ENCODE measurements at regions of chr1 and their contacts with region 1.

Region 1: DNA sequence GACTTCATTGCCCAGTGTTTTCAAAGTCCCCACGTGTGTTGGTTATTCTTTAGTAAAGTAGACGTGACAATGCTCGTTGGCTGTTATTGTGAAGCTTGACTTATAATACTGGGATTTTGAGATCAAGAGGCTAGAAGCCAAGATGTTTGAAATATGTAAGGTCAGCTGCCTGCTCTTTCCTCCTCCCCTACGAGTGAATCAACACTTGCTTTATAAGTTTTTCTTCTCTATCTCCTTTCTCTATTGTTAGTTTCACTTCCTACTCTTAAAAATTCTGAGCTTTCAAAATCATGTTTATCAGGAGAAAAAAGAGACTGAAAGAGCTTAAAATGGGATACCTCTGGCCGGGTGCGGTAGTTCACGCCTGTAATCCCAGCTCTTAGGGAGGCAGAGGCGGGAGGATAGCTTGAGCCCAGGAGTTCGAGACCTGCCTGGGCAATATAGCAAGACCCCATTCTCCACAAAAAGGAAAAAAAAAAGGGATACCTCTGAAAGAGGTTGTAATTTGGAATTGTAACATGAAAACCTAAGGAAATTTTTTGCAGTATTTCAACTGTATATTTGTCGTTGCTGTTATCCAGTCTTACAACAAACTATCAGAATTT is 72.0 kb downstream of the EPB41 start:
- DNase-seq: peak; percentile 28
- H3K4me3 ChIP-seq: peak overlapping the region; percentile 24
- H3K27ac ChIP-seq: peak overlapping the region; percentile 96
- H3K4me1 ChIP-seq: peaks cover 65% of the 10 kb centered on the region
- H3K27me3 ChIP-seq: no peaks in the 10 kb centered on the region
- CTCF ChIP-seq: no peak

Region 2: GRCh38 chr1:28656335-28656734 is 330.1 kb before region 1 on chr1:
- CTCF ChIA-PET with region 1: no interaction called
- POLR2A ChIA-PET with region 1: no interaction called
- intact Hi-C with region 1: no loop called
- DNase-seq: no peak
- H3K4me3 ChIP-seq: no peak overlapping the region
- H3K27ac ChIP-seq: no peak overlapping the region
- H3K4me1 ChIP-seq: no peaks in the 10 kb centered on the region
- H3K27me3 ChIP-seq: no peaks in the 10 kb centered on the region
- CTCF ChIP-seq: no peak

Region 3: GRCh38 chr1:28914228-28915030 is 72.0 kb before region 1 on chr1 and contains the start of gene EPB41:
- CTCF ChIA-PET with region 1: interaction called, 3 read pairs
- POLR2A ChIA-PET with region 1: interaction called, 3 read pairs
- intact Hi-C with region 1: loop called (anchors 5 kb)
- DNase-seq: peak; percentile 99
- H3K4me3 ChIP-seq: peak within 1 kb of the TSS; percentile 89
- H3K27ac ChIP-seq: peak within 1 kb of the TSS; percentile 88
- H3K4me1 ChIP-seq: peaks cover 38% of the 10 kb centered on the region
- H3K27me3 ChIP-seq: no peaks in the 10 kb centered on the region
- CTCF ChIP-seq: no peak
- total RNA-seq, gene EPB41: 337 TPM in 2 replicates

Region 4: DNA sequence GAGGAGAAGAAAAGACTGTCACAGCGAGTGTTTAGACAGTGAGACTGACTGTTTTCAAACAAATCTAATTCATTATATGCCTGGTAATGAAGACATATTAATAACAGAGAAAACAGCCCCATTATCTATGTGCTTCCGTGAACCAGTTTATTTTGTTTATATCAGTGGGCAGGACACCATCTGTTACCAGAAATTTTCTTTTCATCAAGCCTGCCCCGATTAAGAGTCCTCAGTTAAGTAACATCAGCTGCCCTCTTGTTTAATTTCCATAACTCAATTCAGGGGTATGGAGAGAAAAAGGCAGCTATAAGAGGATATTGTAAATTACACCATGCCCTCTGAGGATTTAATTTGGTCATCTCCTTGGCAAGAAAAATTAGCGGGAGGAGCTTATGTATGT is 43.3 kb after region 1 on chr1:
- CTCF ChIA-PET with region 1: no interaction called
- POLR2A ChIA-PET with region 1: no interaction called
- intact Hi-C with region 1: no loop called
- DNase-seq: peak; percentile 52
- H3K4me3 ChIP-seq: no peak overlapping the region
- H3K27ac ChIP-seq: peak overlapping the region; percentile 67
- H3K4me1 ChIP-seq: peaks cover 62% of the 10 kb centered on the region
- H3K27me3 ChIP-seq: no peaks in the 10 kb centered on the region
- CTCF ChIP-seq: no peak